Cardiac septum (tissue), 1 donor: ENCODE measurements at regions of chr15 and their contacts with region 1.

Region 1: GRCh38 chr15:88834211-88834812 is 31.1 kb downstream of the ACAN start:
- DNase-seq: no peak

Region 2: GRCh38 chr15:88476635-88477060 is 357.7 kb before region 1 on chr15:
- intact Hi-C with region 1: loop called (anchors 10 kb)
- DNase-seq: no peak

Region 3: DNA sequence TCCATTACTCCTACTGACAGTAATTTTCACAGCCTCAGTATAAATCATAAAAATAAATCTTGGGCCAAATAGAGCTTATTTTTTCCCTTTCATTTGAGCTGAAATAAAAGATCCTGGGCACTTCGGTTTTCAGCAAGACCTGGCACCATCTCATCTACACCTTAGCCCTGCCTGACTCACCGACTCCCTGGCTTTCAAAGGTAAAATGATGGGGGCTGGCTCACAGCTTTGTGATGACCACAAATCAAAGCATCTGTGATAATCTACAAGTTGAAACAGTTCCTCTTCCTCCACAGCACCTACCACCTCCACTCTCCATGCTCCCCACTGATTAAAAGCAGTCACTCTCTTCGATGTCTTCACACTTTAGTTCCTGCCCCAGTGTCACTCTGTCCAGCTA is 315.4 kb before region 1 on chr15:
- intact Hi-C with region 1: no loop called
- DNase-seq: no peak

Region 4: GRCh38 chr15:88657326-88658069 is 176.8 kb before region 1 on chr15:
- intact Hi-C with region 1: loop called (anchors 1 kb)
- DNase-seq: no peak